Posterior vena cava (tissue), 2 donors: ENCODE measurements at regions of chr1 and their contacts with region 1.

Region 1: GRCh38 chr1:164617377-164618201 is 58.6 kb downstream of the PBX1 start:
- DNase-seq: no peak

Region 2: DNA sequence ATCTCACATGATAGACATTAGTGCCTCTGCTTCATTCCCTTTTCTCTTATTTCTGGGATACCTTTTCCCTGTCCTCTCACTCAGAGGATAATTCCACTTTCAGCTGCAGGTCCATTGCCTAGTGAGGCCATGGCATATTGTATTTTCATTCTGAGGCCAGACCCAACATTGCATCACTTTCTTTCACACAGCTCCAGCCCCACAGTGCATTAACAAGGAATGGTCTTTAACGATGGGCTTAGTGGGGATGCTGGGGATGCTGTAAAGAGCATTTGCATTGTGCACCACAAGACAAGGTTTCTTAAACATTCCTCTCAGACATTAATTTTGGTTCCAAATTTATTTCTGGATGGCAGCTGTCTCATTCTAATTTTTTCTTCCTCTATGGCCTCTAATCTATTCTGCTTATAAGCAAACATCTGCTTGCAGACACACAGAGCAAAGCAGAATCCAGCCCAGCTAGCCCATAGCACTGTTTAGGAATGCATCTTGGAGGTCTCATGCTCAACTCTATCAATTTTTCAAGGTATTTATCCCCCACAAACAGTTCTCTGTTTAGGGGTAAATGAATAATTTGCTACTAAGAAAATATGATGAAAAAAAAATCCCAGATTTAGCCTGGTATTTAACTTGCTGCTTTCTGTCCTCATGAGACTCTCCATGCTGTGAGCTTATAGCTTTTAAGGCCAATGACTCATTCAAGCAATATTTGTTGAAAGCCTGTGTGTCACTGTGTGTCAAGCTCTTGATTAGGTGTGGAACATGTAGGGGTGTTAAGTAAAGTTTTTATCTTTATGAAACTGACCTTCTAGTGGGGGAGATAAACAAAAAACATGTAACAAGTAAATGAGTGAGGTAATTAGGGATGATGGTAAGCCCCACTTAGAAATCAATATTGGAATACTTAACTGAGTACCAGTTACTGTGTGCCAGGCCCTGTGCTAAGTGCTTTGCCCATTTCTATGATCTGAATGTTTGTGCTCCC is 1712.1 kb before region 1 on chr1:
- intact Hi-C with region 1: loop called in 1 of 2 experiments (anchors 10 kb)
- DNase-seq: no peak

Region 3: DNA sequence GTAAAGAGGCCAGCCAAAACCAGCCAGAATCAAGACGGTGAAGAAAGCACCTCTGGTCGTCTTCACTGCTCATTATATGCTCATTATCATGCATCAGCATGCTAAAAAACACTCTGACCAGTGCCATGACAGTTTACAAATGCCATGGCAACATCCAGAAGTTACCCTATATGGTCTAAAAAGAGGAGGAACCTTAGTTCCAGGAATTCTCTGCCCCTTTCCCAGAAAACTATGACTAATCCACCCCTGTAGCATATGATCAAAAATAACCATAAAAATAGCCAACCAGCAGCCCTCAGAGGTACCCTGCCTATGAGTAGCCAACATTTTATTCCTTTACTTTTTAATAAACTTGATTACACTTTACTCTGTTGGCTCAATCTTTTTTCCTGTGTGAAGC is 92.8 kb before region 1 on chr1:
- intact Hi-C with region 1: no loop called
- DNase-seq: no peak

Region 4: DNA sequence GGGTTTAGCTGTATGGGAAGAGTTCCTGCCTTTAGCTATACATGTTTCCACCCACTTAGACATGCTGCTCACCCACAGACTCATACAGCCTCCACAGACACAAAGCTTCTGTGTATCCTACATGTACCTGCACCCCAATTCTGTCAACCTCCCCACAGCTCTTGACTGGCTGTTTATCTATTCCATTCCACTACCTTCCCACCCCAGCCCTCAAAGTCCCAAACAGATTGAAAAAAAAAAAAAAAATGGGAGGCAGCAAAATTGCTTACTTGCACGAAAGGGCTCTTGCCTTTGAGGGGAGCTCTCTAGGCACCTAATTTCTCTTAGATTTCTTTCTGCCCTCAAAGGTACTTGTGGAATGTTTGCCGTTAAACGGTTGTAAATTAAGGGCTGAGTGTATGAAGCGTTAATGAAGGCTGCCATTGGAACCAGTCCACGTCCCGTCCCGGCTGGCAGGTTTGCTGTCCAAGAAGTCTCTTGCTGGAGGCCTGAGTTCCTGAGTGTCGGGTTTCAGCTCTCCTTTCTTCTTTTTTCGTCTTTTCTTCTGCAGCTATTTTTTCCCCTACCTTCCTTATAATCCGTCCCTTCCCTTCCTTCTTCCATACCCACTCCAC is 15.0 kb before region 1 on chr1:
- intact Hi-C with region 1: no loop called
- DNase-seq: no peak

Region 5: GRCh38 chr1:164735315-164736052 is 117.9 kb after region 1 on chr1:
- intact Hi-C with region 1: no loop called
- DNase-seq: no peak

Region 6: GRCh38 chr1:164786980-164787833 is 169.6 kb after region 1 on chr1:
- intact Hi-C with region 1: loop called in 1 of 2 experiments (anchors 5 kb)
- DNase-seq: peak; percentile 93

Region 7: DNA sequence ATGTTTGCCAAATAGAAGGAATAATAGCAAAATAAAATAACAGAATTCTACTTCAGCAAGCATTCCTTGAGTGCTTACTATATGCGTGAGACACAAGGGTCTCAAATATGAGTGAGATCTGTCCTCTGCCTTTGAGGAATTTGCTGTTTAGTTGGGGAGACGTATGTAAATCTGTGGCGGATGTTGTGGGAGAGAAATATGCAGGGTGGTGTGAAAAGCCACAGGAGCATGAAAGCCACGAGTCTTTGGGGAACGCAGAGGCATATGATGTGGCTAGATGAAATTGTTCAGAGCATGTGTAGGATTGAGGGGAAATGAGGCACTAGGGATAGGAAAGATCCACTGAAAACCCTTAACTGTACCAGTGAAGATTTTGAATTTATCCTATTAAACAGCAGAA is 185.8 kb after region 1 on chr1:
- intact Hi-C with region 1: no loop called
- DNase-seq: no peak